B cell (primary cell): ENCODE measurements at regions of chr19 and their contacts with region 1.

Region 1: DNA sequence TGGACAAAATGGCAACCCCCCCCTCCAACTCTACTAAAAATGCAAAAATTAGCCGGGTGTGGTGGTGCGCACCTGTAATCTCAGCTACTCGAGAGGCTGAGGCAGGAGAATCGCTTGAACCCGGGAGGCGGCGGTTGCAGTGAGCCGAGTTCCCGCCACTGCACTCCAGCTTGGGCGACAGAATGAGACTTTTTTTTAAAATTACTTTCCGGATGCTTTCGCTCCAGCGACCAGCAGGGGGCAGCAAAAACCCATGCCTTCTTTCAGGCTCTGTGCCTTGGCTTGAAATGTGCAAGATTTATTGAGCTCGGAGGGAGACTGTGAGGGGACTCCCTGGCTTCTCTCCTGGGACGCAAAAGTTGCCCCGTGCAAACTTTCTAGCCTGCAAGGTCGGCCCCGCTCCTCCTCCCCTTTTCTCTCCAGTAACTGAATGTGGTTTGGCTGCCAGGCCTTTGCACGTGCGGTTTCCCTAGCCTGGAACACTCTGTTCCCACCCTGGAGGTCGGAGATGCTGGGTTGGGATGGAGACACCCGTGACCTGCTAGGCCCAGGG is 61.4 kb upstream of the NFIC start:
- DNase-seq: peak; percentile 78
- ATAC-seq: no peak
- H3K4me3 ChIP-seq: no peak overlapping the region
- H3K4me3 Mint-ChIP-seq: no peak overlapping the region
- H3K27ac ChIP-seq: no peak overlapping the region
- H3K27ac Mint-ChIP-seq: no peak overlapping the region
- H3K4me1 ChIP-seq: no peaks in the 10 kb centered on the region
- H3K4me1 Mint-ChIP-seq: peaks cover 2% of the 10 kb centered on the region
- H3K27me3 ChIP-seq: peaks cover 0 to 38% (median 5%) of the 10 kb centered on the region in 4 experiments
- H3K27me3 Mint-ChIP-seq: peaks cover 32% of the 10 kb centered on the region
- CTCF ChIP-seq: peak; percentile 85

Region 2: DNA sequence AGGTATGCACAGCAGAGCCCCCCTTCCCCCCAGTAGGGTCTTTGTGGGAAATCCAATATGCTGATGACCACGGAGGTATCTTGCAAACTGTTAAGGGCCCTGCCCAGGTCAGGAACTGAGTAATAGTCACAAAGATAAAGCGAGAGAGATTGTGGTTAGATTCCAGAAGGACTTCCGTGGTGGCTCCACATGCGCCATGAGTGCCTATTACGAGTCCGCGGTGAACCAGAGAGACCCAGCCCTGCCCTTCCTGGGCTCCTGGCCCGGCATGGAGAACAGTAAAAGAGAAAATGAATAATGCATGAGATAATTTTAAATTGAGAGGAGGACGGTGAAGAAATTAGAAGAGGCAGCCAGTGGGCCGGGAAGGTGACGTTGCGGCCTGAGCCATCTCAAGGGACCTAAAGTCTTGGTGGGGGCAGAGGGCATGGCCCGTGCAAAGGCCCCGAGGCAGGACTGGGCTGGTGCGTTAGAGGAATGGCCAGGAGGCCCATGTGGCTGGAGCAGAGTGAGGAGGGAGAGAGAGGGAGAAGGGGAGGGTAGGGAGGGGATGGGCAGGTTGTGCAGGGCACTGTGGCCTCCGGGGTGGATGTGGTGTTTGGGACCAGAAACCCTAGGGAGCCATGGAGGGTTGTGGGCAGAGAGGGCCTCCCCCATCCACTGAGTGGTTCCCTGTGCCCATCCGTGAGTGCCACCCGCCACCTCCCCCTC is 14.9 kb after region 1 on chr19:
- CTCF ChIA-PET with region 1: no interaction called
- POLR2A ChIA-PET with region 1: no interaction called
- intact Hi-C with region 1: no loop called
- DNase-seq: no peak
- ATAC-seq: no peak
- H3K4me3 ChIP-seq: no peak overlapping the region
- H3K4me3 Mint-ChIP-seq: no peak overlapping the region
- H3K27ac ChIP-seq: no peak overlapping the region
- H3K27ac Mint-ChIP-seq: no peak overlapping the region
- H3K4me1 ChIP-seq: no peaks in the 10 kb centered on the region
- H3K4me1 Mint-ChIP-seq: no peaks in the 10 kb centered on the region
- H3K27me3 ChIP-seq: peaks cover 0 to 19% (median 0%) of the 10 kb centered on the region in 4 experiments
- H3K27me3 Mint-ChIP-seq: peaks cover 33% of the 10 kb centered on the region
- CTCF ChIP-seq: no peak

Region 3: GRCh38 chr19:3429581-3430080 is 124.7 kb after region 1 on chr19:
- CTCF ChIA-PET with region 1: interaction called, 17 read pairs
- POLR2A ChIA-PET with region 1: no interaction called
- intact Hi-C with region 1: no loop called
- DNase-seq: peak; percentile 82
- ATAC-seq: peak; percentile 82
- H3K4me3 ChIP-seq: no peak overlapping the region
- H3K4me3 Mint-ChIP-seq: no peak overlapping the region
- H3K27ac ChIP-seq: no peak overlapping the region
- H3K27ac Mint-ChIP-seq: no peak overlapping the region
- H3K4me1 ChIP-seq: peaks cover 11 to 22% of the 10 kb centered on the region in 2 donors
- H3K4me1 Mint-ChIP-seq: peaks cover 13% of the 10 kb centered on the region
- H3K27me3 ChIP-seq: no peaks in the 10 kb centered on the region
- H3K27me3 Mint-ChIP-seq: no peaks in the 10 kb centered on the region
- CTCF ChIP-seq: peak; percentile 97

Region 4: GRCh38 chr19:3471954-3472655 is 167.2 kb after region 1 on chr19:
- CTCF ChIA-PET with region 1: interaction called, 10 read pairs
- POLR2A ChIA-PET with region 1: interaction called, 6 read pairs
- intact Hi-C with region 1: no loop called
- DNase-seq: peak; percentile 53
- ATAC-seq: peak; percentile 47
- H3K4me3 ChIP-seq: no peak overlapping the region
- H3K4me3 Mint-ChIP-seq: no peak overlapping the region
- H3K27ac ChIP-seq: no peak overlapping the region
- H3K27ac Mint-ChIP-seq: no peak overlapping the region
- H3K4me1 ChIP-seq: no peaks in the 10 kb centered on the region
- H3K4me1 Mint-ChIP-seq: no peaks in the 10 kb centered on the region
- H3K27me3 ChIP-seq: peaks cover 0 to 5% (median 0%) of the 10 kb centered on the region in 4 experiments
- H3K27me3 Mint-ChIP-seq: peaks cover 4% of the 10 kb centered on the region
- CTCF ChIP-seq: peak; percentile 62